ENCODE measurements at regions of chr2 and their contacts with region 1.

Region 1: DNA sequence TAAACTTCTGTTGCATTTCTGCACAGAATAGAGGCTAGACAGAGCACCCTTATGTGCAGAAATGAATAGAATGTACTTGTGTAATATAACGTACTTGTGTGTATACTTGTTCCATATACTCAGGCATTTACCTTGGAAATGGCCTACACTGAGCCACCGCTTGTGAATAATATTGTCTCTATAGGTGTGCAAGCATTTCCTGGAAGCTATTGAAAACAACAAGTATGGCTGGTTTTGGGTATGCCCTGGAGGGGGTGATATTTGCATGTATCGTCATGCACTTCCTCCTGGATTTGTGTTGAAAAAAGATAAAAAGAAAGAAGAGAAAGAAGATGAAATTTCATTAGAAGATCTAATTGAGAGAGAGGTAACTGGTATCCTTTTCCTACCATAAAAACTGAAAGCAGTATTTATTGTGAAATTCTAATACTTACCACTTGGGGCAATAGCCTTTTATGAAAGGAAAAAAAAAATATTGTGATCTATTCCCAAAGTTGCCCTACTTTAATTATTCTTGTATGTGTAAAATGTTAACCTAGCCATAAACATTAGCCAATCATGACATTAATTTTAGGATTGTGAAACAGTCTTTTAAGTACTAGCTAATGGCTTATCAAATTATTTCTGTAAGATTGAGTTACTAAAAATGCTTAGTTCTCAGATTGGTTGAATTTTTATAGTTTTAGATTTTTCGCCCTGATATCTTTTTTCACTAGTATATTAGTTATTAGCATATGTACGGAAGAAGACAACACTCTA is 18.0 kb downstream of the ZC3H15 start:
- DNase-seq: no peak

Region 2: DNA sequence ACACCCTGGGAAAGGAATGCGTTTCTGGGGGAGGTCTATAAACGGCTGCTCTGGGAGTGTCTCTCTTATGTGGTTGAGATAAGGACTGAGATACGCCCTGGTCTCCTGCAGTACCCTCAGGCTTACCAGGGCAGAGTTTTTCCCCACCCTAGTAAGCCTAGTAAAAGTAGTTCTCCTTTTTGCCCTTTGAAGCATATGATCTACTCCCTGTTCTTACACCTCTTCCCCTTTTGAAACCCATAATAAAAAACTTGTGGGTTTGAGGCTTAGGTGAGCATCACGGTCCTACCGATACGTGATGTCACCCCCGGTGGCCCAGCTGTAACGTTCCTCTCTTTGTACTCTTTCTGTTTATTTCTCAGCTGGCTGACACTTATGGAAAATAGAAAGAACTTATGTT is 668.1 kb before region 1 on chr2:
- intact Hi-C with region 1: no loop called
- DNase-seq: no peak

Region 3: DNA sequence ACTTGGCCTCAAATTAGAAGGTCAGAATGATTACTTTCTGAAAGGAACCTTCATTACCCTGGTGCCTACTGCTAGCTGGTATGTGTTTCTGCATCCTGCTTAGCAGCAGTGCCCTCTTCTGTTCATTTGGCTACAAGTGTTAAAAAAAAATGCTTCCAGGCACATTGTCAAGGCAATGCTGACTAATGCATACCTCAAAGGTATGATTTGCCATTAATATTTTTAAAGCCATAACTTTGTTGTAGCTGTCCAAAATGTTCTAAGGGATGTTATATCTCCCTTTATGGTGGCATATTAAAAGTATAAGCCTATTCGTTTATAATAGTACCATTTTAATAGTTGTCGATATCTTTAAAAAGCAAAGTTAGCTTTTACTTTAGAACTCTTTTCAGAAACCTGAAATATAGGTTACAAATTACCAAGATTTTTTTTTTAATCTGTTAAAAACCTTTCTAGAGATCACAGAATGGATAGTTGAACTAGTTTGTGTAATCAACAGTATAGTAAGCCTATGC is 137.8 kb after region 1 on chr2:
- intact Hi-C with region 1: loop called (anchors 1 kb)
- DNase-seq: no peak